CD14-positive monocyte (primary cell): ENCODE measurements at regions of chr16 and their contacts with region 1.

Region 1: DNA sequence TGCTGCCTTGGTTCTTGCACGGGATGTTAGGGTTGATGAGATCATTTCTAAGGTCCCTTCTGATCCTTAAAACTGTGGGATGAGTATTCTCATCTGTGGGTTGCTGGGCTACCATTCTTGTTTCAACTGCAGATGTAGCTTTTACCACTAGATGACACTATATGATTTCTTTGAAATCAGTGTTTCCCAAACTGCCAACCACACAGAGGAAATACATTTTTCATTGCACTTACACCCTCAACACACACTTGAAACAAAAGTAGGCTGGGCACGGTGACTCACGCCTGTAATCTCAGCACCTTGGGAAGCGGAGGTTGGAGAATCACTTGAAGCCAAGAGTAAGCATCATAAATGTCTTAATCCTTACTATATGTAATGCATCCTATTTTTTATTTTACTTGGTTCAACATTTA is 15.3 kb downstream of the LCMT1 start:
- DNase-seq: peak in 2 of 3 donors; percentile 18 to 40
- H3K4me3 ChIP-seq: no peak overlapping the region
- H3K4me3 Mint-ChIP-seq: no peak overlapping the region
- H3K27ac ChIP-seq: no peak overlapping the region
- H3K27ac Mint-ChIP-seq: no peak overlapping the region
- H3K4me1 ChIP-seq: peaks cover 15 to 21% of the 10 kb centered on the region in 2 donors
- H3K4me1 Mint-ChIP-seq: peaks cover 24% of the 10 kb centered on the region
- H3K27me3 ChIP-seq: no peaks in the 10 kb centered on the region
- H3K27me3 Mint-ChIP-seq: peaks cover 0 to 2% (median 0%) of the 10 kb centered on the region in 3 donors
- CTCF ChIP-seq: peak; percentile 60

Region 2: DNA sequence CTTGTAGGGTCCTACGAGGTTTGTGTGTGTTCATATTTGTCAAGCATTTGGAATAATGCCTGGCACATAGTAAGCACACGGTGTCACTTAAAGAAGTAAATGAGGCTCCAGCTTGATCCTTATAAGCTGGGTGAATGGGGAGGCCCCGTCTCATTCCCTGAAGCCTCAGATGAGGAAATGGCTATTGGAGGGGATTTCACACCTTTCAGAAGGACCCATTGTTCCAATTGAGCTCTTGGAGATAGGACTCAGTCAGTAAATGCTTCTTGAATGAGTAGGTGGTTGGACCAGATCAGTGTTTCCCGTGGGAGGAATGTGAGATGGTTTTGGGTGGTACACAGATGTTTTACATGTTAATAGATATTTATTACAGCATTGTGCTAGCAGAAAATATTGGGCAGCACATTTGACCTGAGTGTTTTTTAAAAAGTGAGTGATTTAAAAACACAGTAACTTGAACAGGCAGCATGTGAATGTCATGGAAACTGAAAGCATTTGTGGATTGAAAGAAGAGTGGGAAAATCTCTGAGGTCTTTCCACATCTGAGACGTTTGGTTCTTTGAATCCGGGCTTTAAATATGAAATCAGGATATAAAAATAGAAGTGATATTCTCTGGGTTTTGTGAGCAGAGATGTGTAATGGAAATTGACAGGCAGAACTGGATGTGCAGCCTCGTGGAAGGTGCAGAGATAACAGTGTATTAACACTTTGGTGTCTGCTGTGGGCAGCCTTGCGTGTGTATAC is 75.2 kb before region 1 on chr16:
- intact Hi-C with region 1: loop called (anchors 1 to 2 kb)
- DNase-seq: peak in 1 of 3 donors; percentile 38
- H3K4me3 ChIP-seq: no peak overlapping the region
- H3K4me3 Mint-ChIP-seq: no peak overlapping the region
- H3K27ac ChIP-seq: no peak overlapping the region
- H3K27ac Mint-ChIP-seq: no peak overlapping the region
- H3K4me1 ChIP-seq: peaks cover 18 to 35% of the 10 kb centered on the region in 2 donors
- H3K4me1 Mint-ChIP-seq: peaks cover 39% of the 10 kb centered on the region
- H3K27me3 ChIP-seq: no peaks in the 10 kb centered on the region
- H3K27me3 Mint-ChIP-seq: peaks cover 0 to 1% (median 0%) of the 10 kb centered on the region in 3 donors
- CTCF ChIP-seq: no peak

Region 3: DNA sequence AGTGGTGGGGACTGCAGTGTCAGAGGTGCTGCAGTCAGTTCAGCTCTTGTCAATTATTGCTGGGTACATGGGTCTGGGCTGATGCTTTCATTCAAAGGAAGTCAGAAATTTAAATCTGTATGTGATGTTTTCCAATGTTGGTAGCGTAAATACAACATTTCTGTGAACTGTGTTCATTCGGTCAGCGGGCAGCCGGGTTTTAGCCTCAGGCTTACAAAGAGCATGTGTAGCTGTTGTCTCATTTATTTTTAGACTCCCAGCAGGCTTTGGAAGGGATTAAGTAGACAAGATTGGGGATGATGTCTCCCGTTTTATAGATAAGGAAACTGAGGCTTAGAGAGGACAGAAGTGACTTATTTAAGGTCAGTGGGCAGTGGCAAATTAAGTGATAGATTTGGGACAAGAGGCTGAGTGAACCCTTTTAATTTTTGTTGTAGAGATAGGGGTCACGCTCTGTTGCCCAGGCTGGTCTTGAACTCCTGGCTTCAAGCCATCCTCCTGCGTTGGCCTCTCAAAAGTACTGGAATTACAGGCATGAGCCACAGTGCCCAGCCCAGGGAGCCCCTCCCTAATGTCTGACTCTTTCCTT is 98.0 kb after region 1 on chr16:
- intact Hi-C with region 1: loop called in 1 of 2 experiments (anchors 10 kb)
- DNase-seq: no peak
- H3K4me3 ChIP-seq: no peak overlapping the region
- H3K4me3 Mint-ChIP-seq: no peak overlapping the region
- H3K27ac ChIP-seq: no peak overlapping the region
- H3K27ac Mint-ChIP-seq: peak overlapping the region in 1 of 7 donors; percentile 12
- H3K4me1 ChIP-seq: no peaks in the 10 kb centered on the region
- H3K4me1 Mint-ChIP-seq: no peaks in the 10 kb centered on the region
- H3K27me3 ChIP-seq: no peaks in the 10 kb centered on the region
- H3K27me3 Mint-ChIP-seq: peaks cover 0 to 3% (median 3%) of the 10 kb centered on the region in 3 donors
- CTCF ChIP-seq: no peak